ENCODE measurements at regions of chr5 and their contacts with region 1.

Region 1: DNA sequence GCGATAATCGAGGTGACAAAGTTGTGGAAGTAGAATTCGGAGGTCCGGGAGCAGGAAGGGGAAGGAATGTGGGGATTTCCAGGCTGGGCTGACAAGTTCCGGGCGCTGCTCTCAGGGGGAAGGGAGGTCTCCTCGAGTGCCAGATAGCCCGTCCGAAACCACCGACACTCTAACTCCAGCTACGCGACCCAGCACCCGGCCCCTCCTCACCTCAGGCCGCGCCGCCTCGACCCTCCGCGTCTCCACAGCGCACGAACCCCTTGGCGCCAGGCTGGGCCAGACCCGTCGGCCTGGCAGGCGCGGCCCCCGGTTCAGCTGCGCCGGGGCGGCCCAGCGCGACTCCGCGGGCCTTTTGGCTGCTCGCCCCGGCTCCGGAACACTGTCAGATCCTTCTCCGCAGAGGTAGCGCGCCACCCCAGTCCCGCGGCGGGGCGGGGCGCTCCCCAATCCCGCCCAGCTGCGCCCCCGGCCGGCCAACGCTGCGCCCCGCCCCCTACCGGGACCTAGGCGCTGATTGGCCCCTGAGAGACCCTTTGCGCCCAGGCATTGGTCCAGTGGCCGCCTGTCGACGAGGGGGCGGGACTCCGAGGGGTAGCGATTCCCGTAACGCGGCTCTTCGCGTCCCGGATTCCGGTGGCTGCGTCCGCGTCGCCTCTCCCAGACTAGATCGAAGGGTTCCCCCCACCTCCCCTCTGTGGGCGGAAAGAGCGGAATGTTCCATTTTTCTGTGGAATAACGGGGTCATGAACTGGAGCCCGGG is at the start of gene IL6ST:
- DNase-seq: peak; percentile 85 to 96
- H3K4me3 ChIP-seq: peak within 1 kb of the TSS; percentile 87
- H3K27ac ChIP-seq: peak within 1 kb of the TSS; percentile 91
- H3K4me1 ChIP-seq: peaks cover 44% of the 10 kb centered on the region
- H3K27me3 ChIP-seq: no peaks in the 10 kb centered on the region
- CTCF ChIP-seq: no peak
- total RNA-seq, gene IL6ST: 52.2 and 60.2 TPM in 2 replicates

Region 2: GRCh38 chr5:56095579-56096102 is 100.9 kb after region 1 on chr5:
- CTCF ChIA-PET with region 1: no interaction called
- POLR2A ChIA-PET with region 1: no interaction called
- intact Hi-C with region 1: loop called (anchors 2 kb)
- DNase-seq: no peak
- H3K4me3 ChIP-seq: no peak overlapping the region
- H3K27ac ChIP-seq: no peak overlapping the region
- H3K4me1 ChIP-seq: peaks cover 20% of the 10 kb centered on the region
- H3K27me3 ChIP-seq: no peaks in the 10 kb centered on the region
- CTCF ChIP-seq: no peak

Region 3: GRCh38 chr5:56112526-56113121 is 117.9 kb after region 1 on chr5:
- CTCF ChIA-PET with region 1: no interaction called
- POLR2A ChIA-PET with region 1: no interaction called
- intact Hi-C with region 1: loop called (anchors 5 kb)
- DNase-seq: peak; percentile 81 to 98
- H3K4me3 ChIP-seq: no peak overlapping the region
- H3K27ac ChIP-seq: peak overlapping the region; percentile 95
- H3K4me1 ChIP-seq: peaks cover 35% of the 10 kb centered on the region
- H3K27me3 ChIP-seq: no peaks in the 10 kb centered on the region
- CTCF ChIP-seq: no peak

Region 4: DNA sequence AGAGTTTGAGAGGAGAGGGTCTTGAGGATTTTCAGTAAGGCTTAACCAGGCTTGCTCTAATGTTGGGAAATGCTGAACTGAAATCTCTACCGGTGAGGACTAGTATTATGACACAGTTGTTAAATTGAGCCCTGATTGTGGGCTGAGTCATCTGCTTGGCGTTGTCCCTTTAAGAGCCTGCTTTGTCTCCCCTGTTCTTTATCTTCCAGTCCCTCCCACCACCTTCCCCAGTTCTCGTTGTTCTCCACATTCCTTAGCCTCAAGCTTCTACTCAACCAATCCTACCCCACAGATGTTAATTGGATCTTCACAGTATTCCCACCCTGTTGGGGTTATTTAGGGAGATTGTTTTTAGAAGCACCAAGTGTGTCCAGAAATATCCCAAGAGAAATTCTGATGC is 180.7 kb after region 1 on chr5:
- CTCF ChIA-PET with region 1: no interaction called
- POLR2A ChIA-PET with region 1: interaction called, 5 read pairs
- intact Hi-C with region 1: loop called (anchors 1 kb)
- DNase-seq: peak; percentile 16 to 57
- H3K4me3 ChIP-seq: no peak overlapping the region
- H3K27ac ChIP-seq: no peak overlapping the region
- H3K4me1 ChIP-seq: peaks cover 21% of the 10 kb centered on the region
- H3K27me3 ChIP-seq: no peaks in the 10 kb centered on the region
- CTCF ChIP-seq: no peak